ENCODE measurements at regions of chr3 and their contacts with region 1.

Region 1: GRCh38 chr3:195803289-195803950 is 8.3 kb downstream of the MUC4 start:
- DNase-seq: peak in 1 of 2 donors; percentile 46
- ATAC-seq: peak in 2 of 3 donors; percentile 55 to 61
- H3K4me3 ChIP-seq: no peak overlapping the region
- H3K4me3 Mint-ChIP-seq: peak overlapping the region; percentile 89
- H3K27ac ChIP-seq: peak overlapping the region; percentile 80
- H3K27ac Mint-ChIP-seq: peak overlapping the region; percentile 97
- H3K4me1 ChIP-seq: peaks cover 41% of the 10 kb centered on the region
- H3K4me1 Mint-ChIP-seq: peaks cover 60 to 73% of the 10 kb centered on the region in 2 donors
- H3K27me3 ChIP-seq: no peaks in the 10 kb centered on the region
- H3K27me3 Mint-ChIP-seq: no peaks in the 10 kb centered on the region
- CTCF ChIP-seq: no peak

Region 2: GRCh38 chr3:195755791-195756676 is 47.4 kb before region 1 on chr3:
- intact Hi-C with region 1: loop called (anchors 1 kb)
- DNase-seq: peak; percentile 47 to 71
- ATAC-seq: peak; percentile 77 to 100 (median 93)
- H3K4me3 ChIP-seq: no peak overlapping the region
- H3K4me3 Mint-ChIP-seq: peak overlapping the region; percentile 79
- H3K27ac ChIP-seq: no peak overlapping the region
- H3K27ac Mint-ChIP-seq: peak overlapping the region; percentile 73 to 76
- H3K4me1 ChIP-seq: peaks cover 20% of the 10 kb centered on the region
- H3K4me1 Mint-ChIP-seq: peaks cover 53 to 67% of the 10 kb centered on the region in 2 donors
- H3K27me3 ChIP-seq: peaks cover 3% of the 10 kb centered on the region
- H3K27me3 Mint-ChIP-seq: peaks cover 0 to 16% of the 10 kb centered on the region in 2 donors
- CTCF ChIP-seq: no peak